ENCODE measurements at regions of chr12 and their contacts with region 1.

Region 1: DNA sequence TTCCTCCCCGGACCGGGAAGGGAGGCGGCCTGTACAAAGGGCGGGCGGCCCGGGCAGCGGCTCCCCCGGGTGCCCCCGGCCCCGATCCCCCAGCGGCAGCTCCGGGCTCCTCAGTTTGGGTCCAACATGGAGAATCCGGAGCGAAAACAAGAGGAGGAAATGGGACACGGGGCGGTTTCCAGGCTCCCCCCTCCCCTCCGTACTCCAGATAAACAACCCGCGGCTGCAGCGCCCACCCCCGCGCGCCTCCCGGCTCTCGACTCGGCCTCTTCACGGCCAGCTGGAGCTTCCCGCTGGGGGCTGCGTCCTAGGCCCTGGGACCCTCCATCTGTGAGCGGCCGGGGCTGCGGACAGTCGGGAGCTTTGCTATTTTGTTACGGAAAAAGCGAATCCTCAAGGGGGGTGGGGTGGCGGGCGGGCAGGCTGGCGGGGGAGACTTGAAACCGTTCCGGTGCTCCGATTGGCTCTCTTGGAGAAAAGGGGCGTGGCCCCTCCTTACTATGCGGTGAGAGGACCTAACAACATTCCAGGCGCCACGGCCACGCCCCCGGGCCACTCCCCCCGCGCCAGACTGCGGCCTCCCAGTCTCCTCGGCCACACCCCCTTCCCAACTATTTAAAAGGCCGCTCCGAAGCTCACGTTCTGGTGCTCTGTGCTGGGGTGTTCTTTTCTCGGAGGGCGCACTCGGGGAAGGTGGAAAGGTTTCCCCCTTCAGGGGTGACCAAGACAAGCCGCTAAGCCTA is at the start of gene CTDSP2:
- DNase-seq: peak; percentile 77 to 90 (median 79)
- H3K4me3 ChIP-seq: peak within 1 kb of the TSS; percentile 84 to 87
- H3K4me3 Mint-ChIP-seq: peak within 1 kb of the TSS; percentile 84 to 96 (median 89)
- H3K27ac ChIP-seq: peak within 1 kb of the TSS; percentile 74
- H3K27ac Mint-ChIP-seq: peak within 1 kb of the TSS; percentile 71 to 95 (median 88)
- H3K4me1 ChIP-seq: peaks cover 44% of the 10 kb centered on the region
- H3K4me1 Mint-ChIP-seq: peaks cover 35 to 62% (median 45%) of the 10 kb centered on the region in 4 donors
- H3K27me3 ChIP-seq: no peaks in the 10 kb centered on the region
- H3K27me3 Mint-ChIP-seq: peaks cover 5 to 8% of the 10 kb centered on the region in 2 donors
- total RNA-seq, gene CTDSP2: 274 to 285 TPM

Region 2: DNA sequence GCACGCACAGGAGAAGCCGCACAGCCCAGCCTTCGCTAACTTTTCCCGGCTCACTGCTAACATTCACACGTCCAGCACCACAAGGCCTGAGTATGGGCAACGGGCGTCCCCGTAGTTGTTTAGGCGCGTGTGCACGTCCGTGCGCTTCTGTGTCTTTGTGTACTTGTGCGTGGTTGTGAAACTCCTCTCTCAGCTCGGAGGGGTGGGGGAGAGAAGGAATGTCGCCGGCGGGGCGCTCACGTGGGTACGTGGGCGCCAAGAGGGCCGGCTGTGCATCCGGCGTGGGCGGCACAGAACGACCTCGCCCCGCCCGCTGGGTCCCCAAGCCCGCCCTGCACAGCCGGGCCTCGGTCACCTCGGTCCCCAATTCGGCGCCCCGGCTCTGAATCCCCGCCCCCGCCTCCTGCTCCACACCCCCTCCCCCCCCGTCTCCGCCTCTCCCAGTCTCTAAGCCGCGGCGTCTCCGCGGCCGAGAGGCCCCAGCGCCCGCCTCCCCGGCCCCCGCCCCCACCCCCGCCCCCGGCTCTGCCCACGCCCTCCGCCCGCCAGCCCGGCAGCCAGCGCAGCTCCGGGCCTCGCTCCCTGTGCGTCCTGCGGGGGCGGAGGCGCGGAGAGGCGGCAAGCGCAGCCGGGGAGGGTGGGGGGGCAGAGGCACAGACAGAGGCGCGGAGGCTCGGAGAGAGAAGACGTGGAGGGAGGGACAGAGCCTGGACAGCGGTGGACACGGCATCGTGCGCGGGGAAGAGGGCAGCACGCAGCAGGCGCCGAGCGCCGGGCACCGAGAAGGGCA is 758.1 kb before region 1 on chr12 and contains the start of gene NAB2:
- CTCF ChIA-PET with region 1: no interaction called
- POLR2A ChIA-PET with region 1: no interaction called
- intact Hi-C with region 1: loop called (anchors 5 kb)
- DNase-seq: peak; percentile 89 to 94 (median 92)
- H3K4me3 ChIP-seq: peak within 1 kb of the TSS; percentile 90 to 91
- H3K4me3 Mint-ChIP-seq: peak within 1 kb of the TSS; percentile 92 to 98 (median 95)
- H3K27ac ChIP-seq: peak within 1 kb of the TSS; percentile 97
- H3K27ac Mint-ChIP-seq: peak within 1 kb of the TSS; percentile 97 to 99 (median 98)
- H3K4me1 ChIP-seq: peaks cover 52% of the 10 kb centered on the region
- H3K4me1 Mint-ChIP-seq: peaks cover 40 to 78% (median 53%) of the 10 kb centered on the region in 4 donors
- H3K27me3 ChIP-seq: no peaks in the 10 kb centered on the region
- H3K27me3 Mint-ChIP-seq: no peaks in the 10 kb centered on the region
- total RNA-seq, gene NAB2: 17.5 to 19.5 TPM

Region 3: DNA sequence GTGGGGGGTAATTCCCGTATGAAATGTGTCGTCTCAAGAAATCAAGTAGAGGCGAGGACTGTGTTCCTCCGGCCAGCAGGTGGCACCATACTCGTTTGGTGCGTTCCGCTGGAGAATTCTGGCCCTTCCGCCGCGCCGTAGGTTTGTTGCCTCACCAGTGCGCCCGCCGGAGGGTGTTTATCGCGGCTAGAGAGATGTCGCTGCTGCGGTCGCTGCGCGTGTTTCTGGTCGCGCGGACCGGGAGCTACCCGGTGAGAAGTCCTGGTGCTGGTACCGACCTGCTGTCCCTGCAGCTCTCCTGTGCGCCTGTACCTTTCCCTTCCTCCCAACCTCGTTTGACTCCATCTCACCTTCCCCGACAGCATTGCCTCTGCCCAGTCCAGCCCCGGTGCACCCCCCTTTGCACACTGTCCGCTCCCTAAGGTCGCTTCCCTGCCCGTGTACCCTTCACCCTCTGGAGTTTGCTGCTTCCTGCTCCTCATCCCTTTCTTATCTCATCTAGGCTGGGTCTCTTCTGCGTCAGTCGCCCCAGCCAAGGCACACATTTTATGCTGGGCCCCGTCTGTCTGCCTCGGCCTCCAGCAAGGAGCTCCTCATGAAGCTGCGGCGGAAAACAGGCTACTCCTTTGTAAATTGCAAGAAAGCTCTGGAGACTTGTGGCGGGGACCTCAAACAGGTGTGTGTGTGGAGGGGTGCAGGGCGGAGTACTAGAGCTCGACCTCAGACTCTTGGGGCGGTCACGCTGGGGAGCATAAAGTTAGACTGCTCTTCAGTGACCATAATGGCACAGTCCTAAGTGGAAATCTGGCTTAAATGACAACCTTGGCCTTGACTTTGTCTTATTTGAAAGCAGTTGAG is 63.9 kb before region 1 on chr12 and contains the start of gene TSFM:
- CTCF ChIA-PET with region 1: interaction called, 4 read pairs
- POLR2A ChIA-PET with region 1: interaction called, 7 read pairs
- intact Hi-C with region 1: loop called (anchors 1 kb)
- DNase-seq: peak; percentile 93 to 96 (median 94)
- H3K4me3 ChIP-seq: peak within 1 kb of the TSS; percentile 92 to 97
- H3K4me3 Mint-ChIP-seq: peak within 1 kb of the TSS; percentile 95 to 100 (median 98)
- H3K27ac ChIP-seq: peak within 1 kb of the TSS; percentile 73
- H3K27ac Mint-ChIP-seq: peak within 1 kb of the TSS; percentile 95 to 100 (median 99)
- H3K4me1 ChIP-seq: peaks cover 59% of the 10 kb centered on the region
- H3K4me1 Mint-ChIP-seq: peaks cover 46 to 57% (median 50%) of the 10 kb centered on the region in 4 donors
- H3K27me3 ChIP-seq: no peaks in the 10 kb centered on the region
- H3K27me3 Mint-ChIP-seq: no peaks in the 10 kb centered on the region
- total RNA-seq, gene TSFM: 18.9 to 22.2 TPM

Region 4: GRCh38 chr12:57815177-57816000 is 31.4 kb before region 1 on chr12:
- CTCF ChIA-PET with region 1: no interaction called
- POLR2A ChIA-PET with region 1: interaction called, 17 read pairs
- intact Hi-C with region 1: no loop called
- DNase-seq: no peak
- H3K4me3 ChIP-seq: no peak overlapping the region
- H3K4me3 Mint-ChIP-seq: no peak overlapping the region
- H3K27ac ChIP-seq: no peak overlapping the region
- H3K27ac Mint-ChIP-seq: peak overlapping the region in 1 of 7 donors; percentile 41
- H3K4me1 ChIP-seq: no peaks in the 10 kb centered on the region
- H3K4me1 Mint-ChIP-seq: peaks cover 0 to 8% (median 5%) of the 10 kb centered on the region in 4 donors
- H3K27me3 ChIP-seq: no peaks in the 10 kb centered on the region
- H3K27me3 Mint-ChIP-seq: no peaks in the 10 kb centered on the region

Region 5: DNA sequence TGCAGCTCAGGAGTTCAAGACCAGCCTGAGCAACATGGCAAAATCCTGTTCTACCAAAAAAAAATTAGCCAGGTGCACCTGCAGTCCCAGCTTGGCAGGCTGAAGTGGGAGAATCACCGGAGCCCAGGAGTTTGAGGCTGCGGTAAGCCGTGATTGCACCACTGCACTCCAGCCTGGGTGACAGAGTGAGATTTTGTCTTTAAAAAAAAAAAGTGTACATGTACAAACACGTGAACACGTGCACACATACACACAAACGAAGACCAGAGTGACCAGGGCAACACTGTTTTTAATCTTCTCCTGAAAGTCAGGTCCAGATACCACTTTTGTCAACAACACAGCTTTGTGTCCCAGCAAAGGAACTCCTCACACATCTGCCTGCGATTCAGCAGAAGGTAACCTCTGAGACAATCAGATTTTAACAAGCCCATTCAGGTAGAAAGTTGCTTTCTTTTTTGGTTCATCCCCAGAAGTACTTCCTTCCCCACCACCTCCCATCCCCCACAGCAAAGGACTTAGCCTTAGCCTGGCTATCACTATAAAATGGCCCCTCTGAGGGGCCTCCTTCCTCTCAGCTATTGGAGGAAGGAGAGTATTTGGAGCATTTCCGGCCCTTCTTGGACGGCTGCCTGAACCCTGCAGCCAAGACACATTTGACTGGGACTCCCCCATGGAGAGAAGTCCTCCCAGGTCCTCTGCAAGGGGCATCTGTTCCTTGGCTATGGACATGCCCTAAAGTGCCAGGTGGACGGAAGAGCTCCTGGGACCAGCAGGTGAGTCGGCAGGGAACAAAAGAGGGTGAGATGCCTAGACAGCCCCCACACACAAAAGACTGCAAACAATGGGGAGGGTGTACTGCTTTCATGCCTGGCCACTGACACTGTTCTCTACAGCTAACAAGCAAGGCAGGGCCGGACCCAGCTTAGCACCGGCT is 10.0 kb before region 1 on chr12:
- CTCF ChIA-PET with region 1: interaction called, 29 read pairs
- POLR2A ChIA-PET with region 1: interaction called, 43 read pairs
- intact Hi-C with region 1: loop called (anchors 1 kb)
- DNase-seq: peak in 4 of 5 donors; percentile 42 to 69 (median 52)
- H3K4me3 ChIP-seq: peak overlapping the region; percentile 6 to 23
- H3K4me3 Mint-ChIP-seq: peak overlapping the region; percentile 41 to 78 (median 67)
- H3K27ac ChIP-seq: peak overlapping the region; percentile 62
- H3K27ac Mint-ChIP-seq: peak overlapping the region; percentile 83 to 95 (median 93)
- H3K4me1 ChIP-seq: peaks cover 99% of the 10 kb centered on the region
- H3K4me1 Mint-ChIP-seq: peaks cover 78 to 99% (median 88%) of the 10 kb centered on the region in 4 donors
- H3K27me3 ChIP-seq: no peaks in the 10 kb centered on the region
- H3K27me3 Mint-ChIP-seq: no peaks in the 10 kb centered on the region

Region 6: DNA sequence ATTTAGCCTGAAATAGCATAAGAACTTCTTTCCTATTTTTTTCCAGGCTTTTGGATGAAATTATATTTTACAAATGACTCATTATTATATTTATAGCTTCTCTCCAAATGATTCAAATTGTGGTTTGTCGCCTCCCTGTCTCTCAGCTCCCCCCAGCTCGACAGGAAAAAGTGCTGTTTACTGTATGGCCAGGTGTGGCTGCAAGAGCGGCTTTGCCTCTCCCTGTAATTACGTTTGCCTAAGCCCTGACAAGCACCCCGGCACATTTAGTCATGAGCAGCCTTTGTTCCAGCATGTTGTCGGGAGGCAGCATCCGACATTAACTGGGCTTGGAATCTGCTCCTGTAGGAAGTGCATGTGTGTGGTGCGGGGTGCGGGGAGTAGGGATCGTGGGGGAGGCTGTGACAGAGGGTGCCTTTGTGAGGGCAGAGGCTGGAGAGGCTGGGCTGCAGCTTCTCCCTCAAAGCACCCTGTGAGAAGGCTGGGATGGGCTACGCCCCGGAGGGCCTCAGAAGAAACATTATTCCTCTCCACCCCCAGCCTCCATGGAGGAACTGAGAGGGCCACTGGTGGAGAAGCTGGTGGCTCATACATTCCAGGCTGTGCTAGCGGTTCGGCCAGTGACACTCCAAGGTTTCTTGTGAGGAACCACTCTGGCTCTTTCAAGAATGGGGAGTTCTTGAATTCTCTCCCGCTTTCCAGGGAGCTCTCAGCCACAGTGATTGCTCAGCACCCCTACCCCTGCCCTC is 41.8 kb after region 1 on chr12:
- CTCF ChIA-PET with region 1: interaction called, 5 read pairs
- POLR2A ChIA-PET with region 1: interaction called, 113 read pairs
- intact Hi-C with region 1: no loop called
- DNase-seq: peak in 4 of 5 donors; percentile 30 to 55 (median 32)
- H3K4me3 ChIP-seq: no peak overlapping the region
- H3K4me3 Mint-ChIP-seq: peak overlapping the region in 7 of 8 donors; percentile 35 to 72 (median 58)
- H3K27ac ChIP-seq: no peak overlapping the region
- H3K27ac Mint-ChIP-seq: peak overlapping the region in 5 of 7 donors; percentile 16 to 89 (median 36)
- H3K4me1 ChIP-seq: peaks cover 23% of the 10 kb centered on the region
- H3K4me1 Mint-ChIP-seq: peaks cover 11 to 44% (median 20%) of the 10 kb centered on the region in 4 donors
- H3K27me3 ChIP-seq: no peaks in the 10 kb centered on the region
- H3K27me3 Mint-ChIP-seq: peaks cover 0 to 2% of the 10 kb centered on the region in 2 donors

Region 7: DNA sequence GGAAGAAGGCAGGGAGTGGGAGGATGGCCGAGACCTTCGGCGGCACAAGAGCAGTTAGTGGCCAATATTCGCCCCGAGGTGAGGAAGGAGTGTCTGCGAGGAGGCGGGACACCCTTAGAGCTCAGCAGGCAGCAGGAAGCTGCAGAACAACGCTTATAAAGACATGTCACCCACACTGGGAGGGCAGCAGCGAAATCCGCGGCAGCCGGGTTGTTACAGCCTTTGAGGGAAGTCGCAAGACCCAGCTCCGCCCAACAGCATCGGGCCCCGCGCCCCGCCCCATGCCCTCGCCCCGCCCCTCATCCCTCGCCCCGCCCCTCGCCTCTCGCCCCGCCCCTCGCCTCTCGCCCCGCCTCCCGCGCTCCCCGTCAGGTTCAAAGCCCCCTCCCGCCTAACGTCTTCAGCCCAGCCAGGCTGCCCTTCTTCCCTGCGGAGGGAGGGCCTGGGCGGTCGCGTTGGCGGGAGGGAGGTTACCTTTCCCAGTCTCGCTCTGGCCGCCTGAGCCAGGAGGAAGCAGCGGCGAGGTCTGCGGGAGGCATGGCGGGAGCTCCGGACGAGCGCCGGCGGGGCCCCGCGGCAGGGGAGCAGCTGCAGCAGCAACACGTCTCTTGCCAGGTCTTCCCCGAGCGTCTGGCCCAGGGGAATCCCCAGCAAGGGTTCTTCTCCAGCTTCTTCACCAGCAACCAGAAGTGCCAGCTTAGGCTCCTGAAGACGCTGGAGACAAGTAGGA is 94.6 kb after region 1 on chr12 and contains the start of gene ATP23:
- CTCF ChIA-PET with region 1: interaction called, 3 read pairs
- POLR2A ChIA-PET with region 1: interaction called, 11 read pairs
- intact Hi-C with region 1: loop called (anchors 2 kb)
- DNase-seq: peak; percentile 90 to 95 (median 94)
- H3K4me3 ChIP-seq: peak within 1 kb of the TSS; percentile 67 to 82
- H3K4me3 Mint-ChIP-seq: peak within 1 kb of the TSS; percentile 96 to 99 (median 99)
- H3K27ac ChIP-seq: peak within 1 kb of the TSS; percentile 90
- H3K27ac Mint-ChIP-seq: peak within 1 kb of the TSS; percentile 85 to 100 (median 99)
- H3K4me1 ChIP-seq: peaks cover 23% of the 10 kb centered on the region
- H3K4me1 Mint-ChIP-seq: peaks cover 24 to 49% (median 32%) of the 10 kb centered on the region in 4 donors
- H3K27me3 ChIP-seq: no peaks in the 10 kb centered on the region
- H3K27me3 Mint-ChIP-seq: no peaks in the 10 kb centered on the region
- total RNA-seq, gene ATP23: 6.1 to 6.7 TPM